ENCODE measurements at regions of chr17 and their contacts with region 1.

Region 1: DNA sequence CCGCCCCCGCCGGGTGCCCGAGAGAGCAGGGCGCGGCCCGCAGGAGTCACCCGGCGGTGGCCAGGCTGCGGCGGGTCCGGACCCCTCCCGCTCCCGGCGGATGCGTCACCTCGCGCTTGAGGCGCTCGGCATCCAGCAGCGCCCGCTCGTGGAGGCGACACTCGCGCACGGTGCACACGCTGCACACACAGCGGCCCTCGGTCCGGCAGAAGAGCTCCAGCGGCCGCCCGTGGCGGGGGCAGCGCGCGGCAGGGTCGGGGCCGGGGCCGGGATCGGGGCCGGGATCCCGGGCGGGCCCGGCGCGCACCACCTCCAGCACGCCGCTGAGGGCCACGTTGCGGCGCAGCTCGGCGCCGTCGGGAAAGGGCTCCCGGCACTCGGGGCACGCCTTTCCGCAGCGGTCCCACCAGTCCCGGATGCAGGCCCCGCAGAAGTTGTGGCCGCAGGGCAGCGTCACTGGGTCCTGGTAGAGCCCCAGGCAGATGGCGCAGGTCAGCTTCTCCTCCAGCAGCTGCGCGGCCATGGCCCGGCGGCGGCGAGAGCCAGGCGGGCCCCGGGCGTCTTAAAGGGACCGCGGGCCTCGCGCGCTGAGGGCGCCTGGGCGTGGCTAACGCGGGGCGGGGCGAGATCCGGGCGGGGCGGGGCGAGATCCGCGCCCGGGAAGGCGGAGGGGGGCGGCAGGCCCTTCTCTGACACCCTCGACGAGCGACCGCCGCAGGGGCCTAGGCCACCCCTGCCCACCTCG is at the start of gene TRIM65:
- DNase-seq: peak; percentile 70 to 79 (median 73)
- H3K4me3 ChIP-seq: peak within 1 kb of the TSS; percentile 61 to 64
- H3K4me3 Mint-ChIP-seq: peak within 1 kb of the TSS; percentile 82 to 90 (median 86)
- H3K27ac ChIP-seq: peak within 1 kb of the TSS; percentile 55
- H3K27ac Mint-ChIP-seq: peak within 1 kb of the TSS; percentile 84 to 97 (median 89)
- H3K4me1 ChIP-seq: peaks cover 28% of the 10 kb centered on the region
- H3K4me1 Mint-ChIP-seq: peaks cover 22 to 28% (median 25%) of the 10 kb centered on the region in 4 donors
- H3K27me3 ChIP-seq: no peaks in the 10 kb centered on the region
- H3K27me3 Mint-ChIP-seq: no peaks in the 10 kb centered on the region
- total RNA-seq, gene TRIM65: 36.5 to 36.9 TPM

Region 2: GRCh38 chr17:75779231-75779986 is 117.2 kb before region 1 on chr17:
- CTCF ChIA-PET with region 1: interaction called, 5 read pairs
- POLR2A ChIA-PET with region 1: interaction called, 64 read pairs
- intact Hi-C with region 1: loop called (anchors 2 kb)
- DNase-seq: peak; percentile 94 to 98 (median 98)
- H3K4me3 ChIP-seq: peak overlapping the region; percentile 18 to 84
- H3K4me3 Mint-ChIP-seq: peak overlapping the region; percentile 94 to 99 (median 98)
- H3K27ac ChIP-seq: peak overlapping the region; percentile 98
- H3K27ac Mint-ChIP-seq: peak overlapping the region; percentile 96 to 100 (median 99)
- H3K4me1 ChIP-seq: peaks cover 45% of the 10 kb centered on the region
- H3K4me1 Mint-ChIP-seq: peaks cover 32 to 70% (median 47%) of the 10 kb centered on the region in 4 donors
- H3K27me3 ChIP-seq: no peaks in the 10 kb centered on the region
- H3K27me3 Mint-ChIP-seq: peaks cover 1 to 2% of the 10 kb centered on the region in 2 donors

Region 3: GRCh38 chr17:75827252-75828115 is 69.1 kb before region 1 on chr17:
- CTCF ChIA-PET with region 1: interaction called, 4 read pairs
- POLR2A ChIA-PET with region 1: interaction called, 11 read pairs
- intact Hi-C with region 1: no loop called
- DNase-seq: peak; percentile 55 to 80 (median 71)
- H3K4me3 ChIP-seq: no peak overlapping the region
- H3K4me3 Mint-ChIP-seq: peak overlapping the region; percentile 17 to 73 (median 56)
- H3K27ac ChIP-seq: peak overlapping the region; percentile 59
- H3K27ac Mint-ChIP-seq: peak overlapping the region; percentile 66 to 91 (median 83)
- H3K4me1 ChIP-seq: peaks cover 26% of the 10 kb centered on the region
- H3K4me1 Mint-ChIP-seq: peaks cover 5 to 24% (median 14%) of the 10 kb centered on the region in 4 donors
- H3K27me3 ChIP-seq: no peaks in the 10 kb centered on the region
- H3K27me3 Mint-ChIP-seq: no peaks in the 10 kb centered on the region

Region 4: GRCh38 chr17:75855310-75856081 is 41.1 kb before region 1 on chr17 and contains the start of gene WBP2:
- CTCF ChIA-PET with region 1: interaction called, 27 read pairs
- POLR2A ChIA-PET with region 1: interaction called, 123 read pairs
- intact Hi-C with region 1: loop called (anchors 1 kb)
- DNase-seq: peak; percentile 96 to 100 (median 99)
- H3K4me3 ChIP-seq: peak within 1 kb of the TSS; percentile 60 to 67
- H3K4me3 Mint-ChIP-seq: peak within 1 kb of the TSS in 6 of 8 donors; percentile 83 to 92 (median 88)
- H3K27ac ChIP-seq: peak within 1 kb of the TSS; percentile 80
- H3K27ac Mint-ChIP-seq: peak within 1 kb of the TSS in 5 of 7 donors; percentile 92 to 95 (median 94)
- H3K4me1 ChIP-seq: peaks cover 37% of the 10 kb centered on the region
- H3K4me1 Mint-ChIP-seq: peaks cover 20 to 50% (median 26%) of the 10 kb centered on the region in 4 donors
- H3K27me3 ChIP-seq: no peaks in the 10 kb centered on the region
- H3K27me3 Mint-ChIP-seq: no peaks in the 10 kb centered on the region
- total RNA-seq, gene WBP2: 159 to 160 TPM

Region 5: GRCh38 chr17:75877752-75878173 is 18.8 kb before region 1 on chr17:
- CTCF ChIA-PET with region 1: interaction called, 96 read pairs
- POLR2A ChIA-PET with region 1: interaction called, 337 read pairs
- intact Hi-C with region 1: loop called (anchors 1 kb)
- DNase-seq: peak; percentile 71 to 76 (median 75)
- H3K4me3 ChIP-seq: peak overlapping the region; percentile 61 to 76
- H3K4me3 Mint-ChIP-seq: peak overlapping the region; percentile 89 to 95 (median 91)
- H3K27ac ChIP-seq: peak overlapping the region; percentile 56
- H3K27ac Mint-ChIP-seq: peak overlapping the region; percentile 88 to 97 (median 94)
- H3K4me1 ChIP-seq: peaks cover 64% of the 10 kb centered on the region
- H3K4me1 Mint-ChIP-seq: peaks cover 26 to 62% (median 45%) of the 10 kb centered on the region in 4 donors
- H3K27me3 ChIP-seq: no peaks in the 10 kb centered on the region
- H3K27me3 Mint-ChIP-seq: no peaks in the 10 kb centered on the region

Region 6: GRCh38 chr17:76005263-76006149 is 108.9 kb after region 1 on chr17:
- CTCF ChIA-PET with region 1: interaction called, 120 read pairs
- POLR2A ChIA-PET with region 1: interaction called, 5 read pairs
- intact Hi-C with region 1: no loop called
- DNase-seq: peak; percentile 68 to 76 (median 74)
- H3K4me3 ChIP-seq: no peak overlapping the region
- H3K4me3 Mint-ChIP-seq: no peak overlapping the region
- H3K27ac ChIP-seq: no peak overlapping the region
- H3K27ac Mint-ChIP-seq: peak overlapping the region in 4 of 7 donors; percentile 2 to 59 (median 24)
- H3K4me1 ChIP-seq: no peaks in the 10 kb centered on the region
- H3K4me1 Mint-ChIP-seq: peaks cover 0 to 5% (median 3%) of the 10 kb centered on the region in 4 donors
- H3K27me3 ChIP-seq: no peaks in the 10 kb centered on the region
- H3K27me3 Mint-ChIP-seq: no peaks in the 10 kb centered on the region

Measured in CD4-positive, alpha-beta memory T cell (primary cell).